ENCODE measurements at regions of chr15 and their contacts with region 1.

Region 1: GRCh38 chr15:58043192-58043903 is 22.2 kb downstream of the ALDH1A2 start:
- DNase-seq: peak in 2 of 3 donors; percentile 44 to 57
- H3K4me3 ChIP-seq: no peak overlapping the region
- H3K4me3 Mint-ChIP-seq: no peak overlapping the region
- H3K27ac ChIP-seq: no peak overlapping the region
- H3K27ac Mint-ChIP-seq: no peak overlapping the region
- H3K4me1 ChIP-seq: peaks cover 0 to 4% of the 10 kb centered on the region in 2 donors
- H3K4me1 Mint-ChIP-seq: peaks cover 19% of the 10 kb centered on the region
- H3K27me3 ChIP-seq: no peaks in the 10 kb centered on the region
- H3K27me3 Mint-ChIP-seq: peaks cover 0 to 2% (median 0%) of the 10 kb centered on the region in 3 donors
- CTCF ChIP-seq: peak; percentile 83

Region 2: DNA sequence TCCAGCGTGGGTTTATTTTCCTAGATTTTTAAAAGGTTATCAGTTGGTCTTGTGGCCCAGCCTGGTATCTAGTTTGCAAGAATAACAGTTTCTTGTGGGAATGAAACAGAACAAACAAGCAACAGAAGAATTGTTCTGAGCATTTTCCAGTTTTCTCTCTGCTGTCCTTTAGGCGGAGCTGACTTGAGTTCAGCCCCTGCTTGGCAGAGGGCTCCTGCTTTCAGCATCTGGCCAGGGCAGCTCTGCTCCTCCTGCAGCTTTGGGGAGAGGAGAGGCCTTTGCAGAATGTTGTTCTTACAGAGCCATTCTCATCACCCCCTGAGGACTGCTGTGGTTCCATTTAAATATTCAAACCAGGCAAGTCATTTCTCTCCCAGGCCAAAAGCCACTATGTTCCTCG is 95.6 kb before region 1 on chr15:
- intact Hi-C with region 1: no loop called
- DNase-seq: no peak
- H3K4me3 ChIP-seq: no peak overlapping the region
- H3K4me3 Mint-ChIP-seq: no peak overlapping the region
- H3K27ac ChIP-seq: no peak overlapping the region
- H3K27ac Mint-ChIP-seq: no peak overlapping the region
- H3K4me1 ChIP-seq: no peaks in the 10 kb centered on the region
- H3K4me1 Mint-ChIP-seq: no peaks in the 10 kb centered on the region
- H3K27me3 ChIP-seq: no peaks in the 10 kb centered on the region
- H3K27me3 Mint-ChIP-seq: peaks cover 5 to 10% (median 10%) of the 10 kb centered on the region in 3 donors
- CTCF ChIP-seq: no peak

Region 3: GRCh38 chr15:58182460-58183163 is 139.3 kb after region 1 on chr15:
- intact Hi-C with region 1: loop called in 1 of 2 experiments (anchors 5 kb)
- DNase-seq: peak; percentile 32 to 57 (median 37)
- H3K4me3 ChIP-seq: no peak overlapping the region
- H3K4me3 Mint-ChIP-seq: peak overlapping the region in 1 of 2 donors; percentile 15
- H3K27ac ChIP-seq: no peak overlapping the region
- H3K27ac Mint-ChIP-seq: no peak overlapping the region
- H3K4me1 ChIP-seq: peaks cover 0 to 2% of the 10 kb centered on the region in 2 donors
- H3K4me1 Mint-ChIP-seq: peaks cover 5% of the 10 kb centered on the region
- H3K27me3 ChIP-seq: peaks cover 0 to 3% of the 10 kb centered on the region in 2 donors
- H3K27me3 Mint-ChIP-seq: peaks cover 4 to 11% (median 10%) of the 10 kb centered on the region in 3 donors
- CTCF ChIP-seq: peak; percentile 93

Measured in CD14-positive monocyte (primary cell).